ENCODE measurements at regions of chr22 and their contacts with region 1.

Region 1: DNA sequence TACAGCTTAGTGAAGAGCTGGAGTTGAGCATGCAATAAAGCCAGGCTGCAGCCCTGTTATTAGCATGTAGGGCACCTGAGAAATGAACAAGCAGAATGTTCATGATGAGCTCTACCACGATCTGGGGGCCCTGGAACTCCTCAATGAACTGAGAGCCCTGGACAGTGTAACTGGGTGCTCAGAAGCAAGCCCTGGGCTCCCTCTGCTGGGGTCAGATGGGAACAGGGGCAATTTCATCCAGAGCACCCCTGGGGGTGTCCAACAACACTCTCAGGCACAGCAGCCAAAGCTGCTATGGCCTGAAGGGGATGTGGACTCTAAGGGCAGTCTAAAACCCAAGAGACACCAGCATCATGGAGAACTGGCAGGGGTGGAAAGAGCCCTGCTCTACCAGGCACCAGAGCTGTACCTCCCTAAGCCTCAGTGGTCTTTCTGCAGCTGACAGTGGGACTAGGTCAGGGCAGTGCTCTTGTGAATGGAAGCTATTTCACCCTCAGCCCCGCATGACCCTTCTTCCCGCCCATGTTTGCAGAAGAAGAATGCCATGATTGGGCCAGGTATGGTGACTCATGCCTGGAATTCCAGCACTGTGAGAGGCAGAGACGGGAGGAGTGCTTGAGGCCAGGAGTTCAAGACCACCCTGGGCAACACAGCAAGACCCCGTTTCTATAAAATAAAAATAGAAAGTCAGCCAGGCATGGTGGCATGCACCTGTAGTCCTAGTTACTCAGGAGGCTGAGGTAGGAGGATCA is 28.9 kb downstream of the THOC5 start:
- DNase-seq: peak; percentile 26 to 28
- ATAC-seq: peak; percentile 86 to 94
- H3K4me3 ChIP-seq: no peak overlapping the region
- H3K27ac ChIP-seq: no peak overlapping the region
- H3K4me1 ChIP-seq: no peaks in the 10 kb centered on the region; the same call in 2 of the 3 replicates
- CTCF ChIP-seq: peak; percentile 31
- EP300 ChIP-seq: no peak
- POLR2A ChIP-seq: no peak
- RAD21 ChIP-seq: peak; percentile 38 to 65; a peak in 4 of 5 replicates

Region 2: GRCh38 chr22:29394931-29395581 is 129.6 kb before region 1 on chr22:
- CTCF ChIA-PET with region 1: interaction called, 30 read pairs
- POLR2A ChIA-PET with region 1: no interaction called
- DNase-seq: peak; percentile 59 to 73
- ATAC-seq: peak; percentile 87 to 96
- H3K4me3 ChIP-seq: no peak overlapping the region
- H3K27ac ChIP-seq: no peak overlapping the region
- H3K4me1 ChIP-seq: peaks cover 17% of the 10 kb centered on the region; the same call in 2 of the 3 replicates
- CTCF ChIP-seq: peak; percentile 75
- EP300 ChIP-seq: no peak
- POLR2A ChIP-seq: no peak
- RAD21 ChIP-seq: peak; percentile 86 to 91